ENCODE measurements at regions of chr16 and their contacts with region 1.

Region 1: DNA sequence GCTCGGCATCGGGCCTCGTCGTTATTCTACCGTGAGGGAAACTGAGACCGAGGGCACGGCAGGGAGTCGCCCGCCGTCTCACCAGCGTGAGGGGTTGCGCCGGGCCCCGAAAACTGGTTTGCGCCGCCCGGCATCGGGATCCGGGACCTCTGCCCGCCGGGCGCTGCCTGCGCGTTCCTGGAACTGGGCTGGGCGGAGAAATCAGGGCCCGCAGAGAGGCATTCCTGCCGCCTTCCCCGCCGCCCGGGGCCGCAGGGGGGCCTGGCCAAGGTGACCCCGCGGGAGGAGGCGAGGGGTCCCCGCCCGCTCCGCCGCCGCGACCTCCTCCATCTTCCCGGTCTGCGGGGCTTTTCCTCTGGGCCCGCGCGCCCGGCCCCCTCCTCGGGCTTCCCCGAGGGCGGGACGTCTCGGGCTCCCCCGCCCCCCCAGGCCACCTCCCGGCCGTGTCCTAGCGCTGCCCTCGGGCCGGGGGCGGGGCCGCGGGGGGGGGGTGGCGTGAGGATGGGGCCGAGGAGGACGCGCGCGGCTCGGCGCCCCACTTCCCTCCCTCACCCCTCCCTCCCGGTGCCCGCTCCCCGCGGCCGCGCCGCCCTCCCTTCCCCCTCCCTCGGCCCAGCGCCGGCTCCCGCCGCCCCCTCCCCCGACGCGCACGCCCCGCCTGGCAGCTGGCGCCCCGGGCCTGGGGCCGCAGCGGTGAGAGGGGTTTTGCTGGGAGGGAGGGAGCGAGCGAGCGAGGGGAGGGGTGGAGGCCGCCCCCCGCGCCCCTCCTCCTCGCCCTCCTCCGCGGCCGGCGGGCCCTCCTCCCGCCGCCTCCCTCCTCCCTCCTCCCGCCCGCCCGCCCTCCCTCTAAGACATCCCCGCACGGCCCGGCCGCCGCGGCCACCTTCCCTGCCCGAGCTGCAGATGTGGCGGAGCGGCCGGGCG is at the start of gene GLIS2:
- DNase-seq: peak; percentile 79 to 91
- ATAC-seq: peak; percentile 79
- H3K4me3 ChIP-seq: peak within 1 kb of the TSS; percentile 52 to 92
- H3K27ac ChIP-seq: peak within 1 kb of the TSS; percentile 44 to 83
- H3K4me1 ChIP-seq: no peaks in the 10 kb centered on the region
- H3K27me3 ChIP-seq: no peaks in the 10 kb centered on the region
- total RNA-seq, gene GLIS2: 37.3 to 72.6 TPM

Region 2: GRCh38 chr16:4271176-4272066 is 44.0 kb before region 1 on chr16:
- intact Hi-C with region 1: loop called in 1 of 2 experiments (anchors 5 kb)
- DNase-seq: peak; percentile 96 to 98
- ATAC-seq: peak; percentile 91
- H3K4me3 ChIP-seq: peak overlapping the region; percentile 66 to 79
- H3K27ac ChIP-seq: peak overlapping the region in 1 of 2 donors; percentile 4
- H3K4me1 ChIP-seq: no peaks in the 10 kb centered on the region
- H3K27me3 ChIP-seq: no peaks in the 10 kb centered on the region

Region 3: DNA sequence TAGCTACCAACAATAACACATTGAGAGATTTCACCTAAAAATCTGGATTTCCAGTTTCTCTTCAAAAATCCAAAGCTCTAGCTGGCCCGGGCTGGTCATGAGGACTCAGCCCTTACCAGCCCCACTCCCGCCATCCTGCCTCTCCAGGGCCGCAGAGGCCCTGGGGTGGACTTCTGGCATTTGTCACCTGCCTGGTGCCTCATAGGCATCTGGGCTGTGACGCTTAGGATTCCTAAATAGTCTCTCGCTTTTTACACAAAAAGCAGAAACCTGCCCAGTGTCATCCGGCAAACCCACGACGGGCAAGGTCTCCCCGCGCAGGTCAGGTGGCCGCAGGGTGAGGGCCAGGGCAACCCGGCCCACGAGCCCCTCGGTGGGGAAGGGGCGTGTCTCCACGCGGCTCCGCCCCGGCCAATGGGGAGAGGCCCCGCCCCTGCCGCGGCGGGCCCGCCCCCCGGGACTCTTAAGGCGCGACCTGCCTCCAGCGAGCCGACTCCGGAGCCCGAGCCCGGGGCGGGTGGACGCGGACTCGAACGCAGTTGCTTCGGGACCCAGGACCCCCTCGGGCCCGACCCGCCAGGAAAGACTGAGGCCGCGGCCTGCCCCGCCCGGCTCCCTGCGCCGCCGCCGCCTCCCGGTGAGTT is 56.0 kb after region 1 on chr16 and contains the start of gene VASN:
- intact Hi-C with region 1: loop called in 1 of 2 experiments (anchors 5 kb)
- DNase-seq: peak; percentile 88 to 96
- ATAC-seq: peak; percentile 77
- H3K4me3 ChIP-seq: peak within 1 kb of the TSS; percentile 73 to 84
- H3K27ac ChIP-seq: peak within 1 kb of the TSS; percentile 85 to 92
- H3K4me1 ChIP-seq: no peaks in the 10 kb centered on the region
- H3K27me3 ChIP-seq: no peaks in the 10 kb centered on the region
- total RNA-seq, gene VASN: 67.0 to 120 TPM

Region 4: GRCh38 chr16:4384509-4384942 is 69.1 kb after region 1 on chr16:
- intact Hi-C with region 1: no loop called
- DNase-seq: peak; percentile 72 to 86
- ATAC-seq: peak; percentile 2
- H3K4me3 ChIP-seq: no peak overlapping the region
- H3K27ac ChIP-seq: peak overlapping the region; percentile 66 to 84
- H3K4me1 ChIP-seq: peaks cover 0 to 7% of the 10 kb centered on the region in 2 donors
- H3K27me3 ChIP-seq: no peaks in the 10 kb centered on the region

Region 5: DNA sequence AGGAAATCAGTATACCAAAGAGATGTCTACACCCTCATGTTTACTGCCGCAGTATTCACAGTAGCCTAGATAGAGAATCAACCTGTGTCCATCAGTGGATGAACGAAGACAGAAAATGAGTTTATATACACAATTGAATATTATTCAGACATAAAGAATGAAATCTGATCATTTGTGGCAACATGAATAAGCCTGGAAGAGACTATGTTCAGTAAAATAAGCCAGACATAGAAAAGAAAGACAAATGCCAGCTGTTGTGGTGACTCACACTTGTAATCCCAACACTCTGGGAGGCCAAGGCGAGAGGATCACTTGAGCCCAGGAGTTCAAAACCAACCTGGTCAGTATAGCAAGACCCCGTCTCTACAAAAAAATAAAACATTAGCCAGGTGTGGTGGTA is 394.0 kb after region 1 on chr16:
- intact Hi-C with region 1: no loop called
- DNase-seq: no peak
- ATAC-seq: no peak
- H3K4me3 ChIP-seq: no peak overlapping the region
- H3K27ac ChIP-seq: no peak overlapping the region
- H3K4me1 ChIP-seq: no peaks in the 10 kb centered on the region
- H3K27me3 ChIP-seq: no peaks in the 10 kb centered on the region

Measured in aorta (tissue), 5 donors.